ENCODE measurements at regions of chr9 and their contacts with region 1.

Region 1: GRCh38 chr9:17462869-17463464 is 115.9 kb upstream of the SH3GL2 start:
- DNase-seq: peak; percentile 78
- ATAC-seq: peak; percentile 82
- H3K4me3 ChIP-seq: no peak overlapping the region
- H3K27ac ChIP-seq: no peak overlapping the region
- H3K4me1 ChIP-seq: no peaks in the 10 kb centered on the region
- H3K27me3 ChIP-seq: no peaks in the 10 kb centered on the region
- CTCF ChIP-seq: peak; percentile 83
- POLR2A ChIP-seq: no peak
- RAD21 ChIP-seq: peak; percentile 87

Region 2: DNA sequence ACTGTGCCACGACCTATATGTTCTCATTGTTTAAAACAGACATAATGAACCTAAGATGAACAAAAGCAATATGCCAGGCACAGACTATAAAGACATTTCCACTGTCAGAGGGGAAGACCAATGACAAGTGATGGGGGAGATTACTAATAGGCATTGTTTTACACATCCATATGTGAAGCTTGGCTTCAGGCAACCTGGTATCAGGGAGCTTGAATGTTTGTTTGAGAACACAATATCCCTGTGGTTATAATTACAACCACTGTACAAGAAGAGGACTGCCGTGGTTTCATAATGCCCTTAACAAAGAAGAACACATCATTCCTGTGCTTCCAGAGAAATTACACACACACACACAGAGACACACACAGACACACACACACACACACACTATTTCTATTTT is 978.2 kb before region 1 on chr9:
- CTCF ChIA-PET with region 1: no interaction called
- POLR2A ChIA-PET with region 1: no interaction called
- dilution Hi-C with region 1: no loop called
- in situ Hi-C with region 1: loop called (anchors 25 kb)
- intact Hi-C with region 1: no loop called
- DNase-seq: peak; percentile 52
- ATAC-seq: peak; percentile 49
- H3K4me3 ChIP-seq: no peak overlapping the region
- H3K27ac ChIP-seq: no peak overlapping the region
- H3K4me1 ChIP-seq: peaks cover 8% of the 10 kb centered on the region
- H3K27me3 ChIP-seq: no peaks in the 10 kb centered on the region
- CTCF ChIP-seq: no peak
- POLR2A ChIP-seq: no peak
- RAD21 ChIP-seq: no peak

Region 3: DNA sequence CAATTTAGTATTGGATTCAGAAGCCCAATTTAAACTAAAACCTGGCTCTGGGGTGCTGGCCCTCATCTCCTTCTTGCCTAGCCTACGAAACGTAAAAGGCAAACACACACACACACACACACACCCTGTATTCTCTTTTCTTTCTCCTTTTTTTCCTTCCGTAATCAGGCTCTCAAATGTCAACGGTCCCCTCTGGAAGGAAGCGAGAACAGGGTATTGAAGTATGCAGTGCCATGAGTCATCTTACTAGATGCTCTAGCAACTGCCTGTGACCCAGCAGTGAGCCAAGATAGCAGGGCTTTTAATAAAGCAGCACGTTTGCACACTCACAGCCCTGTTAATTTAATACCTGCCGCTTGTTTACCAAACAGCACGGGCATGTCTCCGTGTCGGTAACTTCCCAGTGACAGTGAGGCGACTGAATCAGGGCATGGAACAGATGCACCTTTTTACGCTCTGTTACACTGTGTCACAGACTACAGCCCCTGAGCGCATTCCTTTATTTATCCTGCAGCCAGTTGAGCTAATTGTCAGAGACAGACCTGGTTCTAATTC is 836.3 kb before region 1 on chr9:
- CTCF ChIA-PET with region 1: no interaction called
- POLR2A ChIA-PET with region 1: no interaction called
- dilution Hi-C with region 1: no loop called
- in situ Hi-C with region 1: loop called (anchors 25 kb)
- intact Hi-C with region 1: no loop called
- DNase-seq: peak; percentile 89
- ATAC-seq: peak; percentile 84
- H3K4me3 ChIP-seq: no peak overlapping the region
- H3K27ac ChIP-seq: peak overlapping the region; percentile 42
- H3K4me1 ChIP-seq: peaks cover 26% of the 10 kb centered on the region
- H3K27me3 ChIP-seq: no peaks in the 10 kb centered on the region
- CTCF ChIP-seq: no peak
- POLR2A ChIP-seq: no peak
- RAD21 ChIP-seq: no peak

Region 4: GRCh38 chr9:16708638-16709435 is 754.1 kb before region 1 on chr9:
- CTCF ChIA-PET with region 1: no interaction called
- POLR2A ChIA-PET with region 1: no interaction called
- dilution Hi-C with region 1: no loop called
- in situ Hi-C with region 1: no loop called
- intact Hi-C with region 1: no loop called
- DNase-seq: peak; percentile 74
- ATAC-seq: no peak
- H3K4me3 ChIP-seq: no peak overlapping the region
- H3K27ac ChIP-seq: peak overlapping the region; percentile 37
- H3K4me1 ChIP-seq: peaks cover 16% of the 10 kb centered on the region
- H3K27me3 ChIP-seq: no peaks in the 10 kb centered on the region
- CTCF ChIP-seq: no peak
- POLR2A ChIP-seq: no peak
- RAD21 ChIP-seq: no peak

Region 5: DNA sequence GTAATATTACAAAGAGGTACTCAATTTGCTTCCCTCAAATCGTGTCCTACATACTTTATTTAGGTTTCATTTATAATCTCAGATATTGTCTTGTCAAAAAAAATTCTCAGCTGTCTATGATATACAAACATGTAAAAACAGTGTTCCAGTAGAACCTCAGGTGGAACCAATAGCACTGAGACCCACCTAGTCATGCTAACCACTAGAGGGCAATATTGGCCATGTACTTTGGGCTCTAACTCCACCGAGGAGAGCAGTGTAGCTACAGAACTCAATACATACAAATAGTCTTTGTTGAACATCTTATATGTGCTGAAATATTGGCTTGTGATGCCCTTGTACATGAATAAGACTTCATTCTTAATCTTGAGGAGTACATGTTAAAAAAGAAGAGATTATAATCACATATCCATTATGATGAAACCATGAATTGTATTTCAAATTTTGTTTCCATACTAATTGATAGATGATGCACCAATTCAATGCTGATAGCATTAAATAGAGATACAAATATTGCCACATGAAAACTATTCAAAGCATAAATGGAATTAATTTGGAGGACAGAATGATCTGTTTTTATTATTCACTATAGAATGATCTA is 399.3 kb before region 1 on chr9:
- CTCF ChIA-PET with region 1: no interaction called
- POLR2A ChIA-PET with region 1: no interaction called
- dilution Hi-C with region 1: no loop called
- in situ Hi-C with region 1: no loop called
- intact Hi-C with region 1: loop called (anchors 1 kb)
- DNase-seq: peak; percentile 64
- ATAC-seq: peak; percentile 93
- H3K4me3 ChIP-seq: no peak overlapping the region
- H3K27ac ChIP-seq: no peak overlapping the region
- H3K4me1 ChIP-seq: no peaks in the 10 kb centered on the region
- H3K27me3 ChIP-seq: no peaks in the 10 kb centered on the region
- CTCF ChIP-seq: peak; percentile 67
- POLR2A ChIP-seq: no peak
- RAD21 ChIP-seq: peak; percentile 73

Region 6: DNA sequence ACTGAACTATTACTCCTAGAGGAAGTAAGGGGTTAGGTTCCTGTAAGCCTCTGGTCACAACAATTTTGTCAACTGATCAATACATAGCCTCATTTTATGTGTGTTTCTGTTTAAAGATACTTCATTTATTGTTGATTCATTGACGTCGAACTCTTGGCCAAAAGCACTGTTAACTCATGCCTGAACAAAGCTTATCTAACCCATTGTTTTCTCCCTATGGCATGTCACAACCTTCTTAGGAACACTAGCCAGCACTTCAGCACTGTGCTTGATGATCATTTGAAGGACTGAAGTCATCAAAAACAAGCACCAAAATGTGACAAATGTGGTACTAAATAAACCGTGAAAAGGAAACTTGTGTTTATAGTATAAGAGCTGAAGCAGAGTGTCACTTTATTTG is 314.6 kb before region 1 on chr9:
- CTCF ChIA-PET with region 1: no interaction called
- POLR2A ChIA-PET with region 1: no interaction called
- dilution Hi-C with region 1: no loop called
- in situ Hi-C with region 1: no loop called
- intact Hi-C with region 1: no loop called
- DNase-seq: no peak
- ATAC-seq: no peak
- H3K4me3 ChIP-seq: no peak overlapping the region
- H3K27ac ChIP-seq: no peak overlapping the region
- H3K4me1 ChIP-seq: no peaks in the 10 kb centered on the region
- H3K27me3 ChIP-seq: no peaks in the 10 kb centered on the region
- CTCF ChIP-seq: no peak
- POLR2A ChIP-seq: no peak
- RAD21 ChIP-seq: no peak

Region 7: DNA sequence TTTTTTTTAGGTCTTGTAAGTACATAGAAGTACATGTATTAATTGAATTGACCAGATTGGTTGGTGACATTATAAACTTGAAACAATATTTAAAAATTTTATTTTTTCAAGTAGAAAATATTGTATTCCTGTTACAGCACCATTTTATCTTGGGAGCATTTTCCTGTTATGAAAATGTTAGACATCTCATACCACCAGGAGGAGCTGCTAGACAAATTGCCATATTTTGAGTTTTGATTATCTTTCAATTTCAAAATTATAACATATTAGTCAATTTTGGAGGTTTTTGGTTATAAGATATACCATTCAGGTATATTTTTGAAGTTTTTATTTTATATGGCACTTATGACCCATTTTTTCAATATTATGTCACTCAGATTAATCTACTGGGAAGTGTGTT is 243.7 kb before region 1 on chr9:
- CTCF ChIA-PET with region 1: interaction called, 3 read pairs
- POLR2A ChIA-PET with region 1: no interaction called
- dilution Hi-C with region 1: no loop called
- in situ Hi-C with region 1: no loop called
- intact Hi-C with region 1: loop called (anchors 2 kb)
- DNase-seq: peak; percentile 10
- ATAC-seq: no peak
- H3K4me3 ChIP-seq: no peak overlapping the region
- H3K27ac ChIP-seq: no peak overlapping the region
- H3K4me1 ChIP-seq: no peaks in the 10 kb centered on the region
- H3K27me3 ChIP-seq: no peaks in the 10 kb centered on the region
- CTCF ChIP-seq: peak; percentile 51
- POLR2A ChIP-seq: no peak
- RAD21 ChIP-seq: peak; percentile 37; the same call in 1 of the 2 replicates

Region 8: GRCh38 chr9:17688834-17689233 is 225.9 kb after region 1 on chr9:
- CTCF ChIA-PET with region 1: no interaction called
- POLR2A ChIA-PET with region 1: no interaction called
- dilution Hi-C with region 1: no loop called
- in situ Hi-C with region 1: no loop called
- intact Hi-C with region 1: no loop called
- DNase-seq: no peak
- ATAC-seq: no peak
- H3K4me3 ChIP-seq: no peak overlapping the region
- H3K27ac ChIP-seq: no peak overlapping the region
- H3K4me1 ChIP-seq: no peaks in the 10 kb centered on the region
- H3K27me3 ChIP-seq: no peaks in the 10 kb centered on the region
- CTCF ChIP-seq: no peak
- POLR2A ChIP-seq: no peak
- RAD21 ChIP-seq: no peak